Tibial artery (tissue), 4 donors: ENCODE measurements at regions of chr1 and their contacts with region 1.

Region 1: DNA sequence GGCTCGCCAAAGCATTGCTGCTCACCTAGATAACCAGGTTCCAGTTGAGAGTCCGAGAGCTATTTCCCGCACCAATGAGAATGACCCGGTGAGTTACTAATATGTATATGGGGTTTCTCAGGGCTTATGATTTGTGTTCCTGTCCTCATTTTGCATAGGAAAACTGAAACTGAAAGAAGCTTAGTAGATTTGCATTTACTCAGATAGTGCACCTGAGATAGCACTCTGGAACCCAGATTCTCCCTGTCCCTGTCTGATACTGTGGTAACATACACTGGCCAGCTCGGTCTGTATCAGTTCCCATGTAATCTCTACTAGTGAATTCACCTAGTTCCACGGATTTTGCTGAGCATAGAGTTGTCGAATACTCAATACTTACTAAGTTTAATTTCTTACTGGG is 28.1 kb downstream of the DAP3 start:
- DNase-seq: no peak
- H3K4me3 ChIP-seq: no peak overlapping the region
- H3K27ac ChIP-seq: no peak overlapping the region
- H3K4me1 ChIP-seq: no peaks in the 10 kb centered on the region
- H3K27me3 ChIP-seq: no peaks in the 10 kb centered on the region
- CTCF ChIP-seq: no peak

Region 2: GRCh38 chr1:155657463-155657862 is 59.6 kb before region 1 on chr1:
- intact Hi-C with region 1: no loop called
- DNase-seq: no peak
- H3K4me3 ChIP-seq: no peak overlapping the region
- H3K27ac ChIP-seq: no peak overlapping the region
- H3K4me1 ChIP-seq: no peaks in the 10 kb centered on the region
- H3K27me3 ChIP-seq: no peaks in the 10 kb centered on the region
- CTCF ChIP-seq: no peak

Region 3: DNA sequence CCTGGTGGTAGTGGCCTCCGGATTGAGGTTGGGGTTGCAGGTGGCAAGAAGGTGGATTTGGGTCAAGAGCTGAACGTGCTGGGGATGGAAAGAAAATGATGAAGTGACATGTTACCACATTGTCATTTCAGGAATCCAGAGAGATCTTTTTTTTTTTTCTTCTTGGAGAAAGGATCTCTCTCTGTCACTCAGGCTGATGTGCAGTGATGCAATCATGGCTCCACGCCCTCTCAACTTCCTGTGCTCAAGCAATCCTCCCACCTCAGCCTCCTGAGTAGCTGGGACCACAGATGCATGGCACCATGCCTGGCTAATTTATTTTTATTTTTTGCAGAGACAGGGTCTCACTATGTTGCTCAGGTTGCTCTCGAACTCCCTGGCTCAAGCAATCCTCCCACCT is 59.4 kb after region 1 on chr1:
- intact Hi-C with region 1: loop called (anchors 10 kb)
- DNase-seq: no peak
- H3K4me3 ChIP-seq: no peak overlapping the region
- H3K27ac ChIP-seq: no peak overlapping the region
- H3K4me1 ChIP-seq: no peaks in the 10 kb centered on the region
- H3K27me3 ChIP-seq: no peaks in the 10 kb centered on the region
- CTCF ChIP-seq: no peak

Region 4: GRCh38 chr1:155892801-155893200 is 175.8 kb after region 1 on chr1:
- intact Hi-C with region 1: no loop called
- DNase-seq: no peak
- H3K4me3 ChIP-seq: no peak overlapping the region
- H3K27ac ChIP-seq: peak overlapping the region; percentile 69 to 78
- H3K4me1 ChIP-seq: peaks cover 0 to 21% (median 16%) of the 10 kb centered on the region in 4 donors
- H3K27me3 ChIP-seq: no peaks in the 10 kb centered on the region
- CTCF ChIP-seq: no peak

Region 5: GRCh38 chr1:155934097-155934935 is 217.3 kb after region 1 on chr1 and contains the start of gene KHDC4:
- intact Hi-C with region 1: no loop called
- DNase-seq: peak; percentile 97 to 98
- H3K4me3 ChIP-seq: peak within 1 kb of the TSS; percentile 78 to 84
- H3K27ac ChIP-seq: peak within 1 kb of the TSS; percentile 89 to 94
- H3K4me1 ChIP-seq: peaks cover 4 to 56% (median 42%) of the 10 kb centered on the region in 4 donors
- H3K27me3 ChIP-seq: no peaks in the 10 kb centered on the region
- CTCF ChIP-seq: peak in 1 of 2 experiments; percentile 15